Sigmoid colon (tissue), 7 donors: ENCODE measurements at regions of chr4 and their contacts with region 1.

Region 1: DNA sequence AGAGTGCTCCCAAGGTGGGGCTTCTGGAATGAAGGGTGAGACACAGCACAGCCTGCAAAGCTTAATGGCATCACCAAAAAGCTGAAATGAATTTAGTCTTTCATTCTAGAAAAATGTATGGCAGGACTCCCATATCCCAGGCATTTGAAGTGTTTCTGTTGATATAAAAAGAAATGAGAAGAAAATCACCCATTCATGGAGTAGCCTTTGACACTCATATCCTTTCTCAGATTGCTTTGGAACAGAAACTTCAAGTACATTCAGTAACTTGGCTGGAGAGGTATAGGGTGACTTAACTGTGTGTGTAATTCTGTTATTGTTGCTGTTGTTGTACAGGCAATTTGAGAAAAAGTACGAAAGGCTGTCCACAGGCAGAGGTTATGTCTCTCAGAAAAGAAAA is 35.3 kb downstream of the C4orf54 start:
- DNase-seq: no peak
- H3K4me3 ChIP-seq: no peak overlapping the region
- H3K27ac ChIP-seq: peak overlapping the region; percentile 42 to 78 (median 76)
- H3K4me1 ChIP-seq: peaks cover 0 to 48% (median 26%) of the 10 kb centered on the region in 4 donors
- H3K27me3 ChIP-seq: no peaks in the 10 kb centered on the region
- CTCF ChIP-seq: no peak
- EP300 ChIP-seq: no peak
- POLR2A ChIP-seq: no peak

Region 2: GRCh38 chr4:99219479-99219878 is 402.9 kb before region 1 on chr4:
- intact Hi-C with region 1: no loop called
- DNase-seq: no peak
- H3K4me3 ChIP-seq: no peak overlapping the region
- H3K27ac ChIP-seq: no peak overlapping the region
- H3K4me1 ChIP-seq: peaks cover 0 to 12% (median 2%) of the 10 kb centered on the region in 4 donors
- H3K27me3 ChIP-seq: no peaks in the 10 kb centered on the region
- CTCF ChIP-seq: no peak
- EP300 ChIP-seq: no peak
- POLR2A ChIP-seq: no peak

Region 3: DNA sequence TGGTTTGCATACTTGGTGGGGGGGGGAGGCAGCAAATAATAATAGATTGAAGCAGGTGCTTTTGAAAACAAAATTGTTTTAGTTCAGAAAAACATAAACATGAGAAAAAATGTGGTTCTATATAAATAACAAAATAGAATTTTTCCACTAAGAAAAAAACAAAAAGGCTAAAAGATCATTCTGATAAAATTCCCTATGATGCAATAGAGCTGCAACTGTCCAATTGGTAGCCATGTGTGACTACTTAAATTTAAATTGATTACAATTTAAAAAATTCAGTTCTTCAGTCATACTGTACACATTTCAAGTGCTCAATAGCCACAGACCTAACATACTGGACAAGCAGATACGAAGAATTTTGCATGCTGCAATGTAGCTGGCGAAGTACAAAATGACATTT is 69.5 kb before region 1 on chr4:
- intact Hi-C with region 1: no loop called
- DNase-seq: no peak
- H3K4me3 ChIP-seq: no peak overlapping the region
- H3K27ac ChIP-seq: no peak overlapping the region
- H3K4me1 ChIP-seq: no peaks in the 10 kb centered on the region
- H3K27me3 ChIP-seq: no peaks in the 10 kb centered on the region
- CTCF ChIP-seq: no peak
- EP300 ChIP-seq: no peak
- POLR2A ChIP-seq: no peak

Region 4: DNA sequence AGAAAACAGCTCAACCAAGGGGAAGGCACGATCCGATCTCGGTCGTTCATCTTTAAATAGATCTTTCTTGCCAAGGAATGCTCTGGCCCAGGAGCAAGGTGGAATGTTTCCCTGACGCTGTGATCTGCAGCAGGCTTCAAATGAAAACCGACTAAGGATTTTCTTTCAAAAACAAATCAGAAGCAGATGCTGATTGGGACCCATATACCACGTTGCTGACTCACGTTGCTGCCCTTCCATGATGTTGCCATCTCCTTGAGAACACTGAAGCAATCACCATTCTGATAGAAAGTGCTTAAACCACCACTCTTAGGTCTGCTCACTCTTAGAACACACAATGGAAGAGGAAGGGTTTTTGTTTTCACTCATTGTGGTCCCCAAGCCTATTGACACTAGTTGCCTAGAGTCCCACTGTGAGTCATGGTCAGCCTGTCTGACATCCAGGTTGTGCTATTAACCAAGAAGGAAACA is 245.8 kb after region 1 on chr4:
- intact Hi-C with region 1: loop called (anchors 2 kb)
- DNase-seq: no peak
- H3K4me3 ChIP-seq: no peak overlapping the region
- H3K27ac ChIP-seq: peak overlapping the region; percentile 63 to 76 (median 68)
- H3K4me1 ChIP-seq: peaks cover 0 to 51% (median 35%) of the 10 kb centered on the region in 4 donors
- H3K27me3 ChIP-seq: no peaks in the 10 kb centered on the region
- CTCF ChIP-seq: no peak
- EP300 ChIP-seq: no peak
- POLR2A ChIP-seq: no peak